AG04450 (cell line): ENCODE measurements at regions of chrX and their contacts with region 1.

Region 1: GRCh38 chrX:49884290-49884862 is 5.1 kb downstream of the USP27X start:
- DNase-seq: no peak
- H3K4me3 ChIP-seq: no peak overlapping the region
- H3K27ac ChIP-seq: no peak overlapping the region
- H3K27me3 ChIP-seq: no peaks in the 10 kb centered on the region
- CTCF ChIP-seq: peak; percentile 71

Region 2: DNA sequence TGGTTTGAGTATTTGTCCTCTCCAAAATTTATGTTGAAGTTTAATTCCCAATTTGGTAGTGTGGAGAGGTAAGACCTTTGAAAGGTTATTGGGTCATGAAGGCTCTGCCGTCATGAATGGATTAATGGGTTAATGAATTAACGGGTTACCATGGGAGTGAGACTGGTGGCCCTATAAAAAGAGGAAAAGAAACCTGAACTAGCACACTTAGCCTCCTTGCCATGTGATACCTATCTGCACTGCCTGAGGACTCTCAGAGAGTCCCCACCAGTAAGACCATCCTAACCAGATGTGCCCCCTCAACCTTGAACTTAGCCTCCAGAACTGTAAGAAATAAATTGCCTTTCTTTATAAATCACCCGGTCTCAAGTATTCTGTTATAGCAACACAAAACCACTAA is 227.8 kb before region 1 on chrX:
- CTCF ChIA-PET with region 1: no interaction called
- POLR2A ChIA-PET with region 1: no interaction called
- DNase-seq: no peak
- H3K4me3 ChIP-seq: no peak overlapping the region
- H3K27ac ChIP-seq: no peak overlapping the region
- H3K27me3 ChIP-seq: no peaks in the 10 kb centered on the region
- CTCF ChIP-seq: no peak

Region 3: DNA sequence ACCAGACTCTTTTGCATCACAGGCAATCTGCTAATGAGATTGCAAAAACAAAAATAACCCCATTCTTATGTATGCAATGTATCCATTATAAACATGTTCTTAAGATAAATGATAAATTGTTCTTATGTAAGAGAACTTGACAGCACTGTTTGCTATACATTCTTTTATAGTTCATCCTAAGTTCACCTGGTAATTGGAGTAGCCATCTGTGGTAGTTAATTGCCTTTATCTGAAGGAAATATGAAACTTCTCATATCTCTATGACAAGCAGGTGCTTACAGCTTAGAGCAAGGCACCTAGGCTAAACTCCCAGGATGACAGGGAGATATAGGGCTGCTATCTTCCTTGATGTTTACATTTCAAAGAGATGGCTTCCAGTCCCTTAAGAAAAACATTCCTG is 16.7 kb after region 1 on chrX:
- CTCF ChIA-PET with region 1: interaction called, 12 read pairs
- POLR2A ChIA-PET with region 1: no interaction called
- DNase-seq: no peak
- H3K4me3 ChIP-seq: no peak overlapping the region
- H3K27ac ChIP-seq: no peak overlapping the region
- H3K27me3 ChIP-seq: no peaks in the 10 kb centered on the region
- CTCF ChIP-seq: no peak

Region 4: DNA sequence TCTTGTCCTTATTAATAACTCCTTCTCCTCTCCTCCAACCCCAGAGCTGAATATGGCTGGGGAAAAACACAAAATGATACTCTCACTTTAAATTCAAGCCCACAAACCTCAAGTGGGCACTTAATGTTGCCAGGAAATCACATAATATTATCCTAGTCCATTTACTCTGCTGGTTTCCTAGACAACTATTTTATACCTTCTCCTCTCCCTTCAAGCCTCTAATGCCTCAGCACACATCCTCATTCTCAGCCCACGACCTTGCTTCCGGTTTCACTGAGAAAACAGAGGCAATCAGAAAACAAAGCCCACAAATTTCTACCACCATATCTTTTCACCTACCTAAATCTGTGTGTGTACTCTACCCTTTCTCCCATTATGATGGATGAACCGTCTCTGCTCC is 26.0 kb after region 1 on chrX:
- CTCF ChIA-PET with region 1: interaction called, 11 read pairs
- POLR2A ChIA-PET with region 1: no interaction called
- DNase-seq: no peak
- H3K4me3 ChIP-seq: no peak overlapping the region
- H3K27ac ChIP-seq: no peak overlapping the region
- H3K27me3 ChIP-seq: no peaks in the 10 kb centered on the region
- CTCF ChIP-seq: no peak

Region 5: GRCh38 chrX:49915361-49916222 is 31.2 kb after region 1 on chrX:
- CTCF ChIA-PET with region 1: interaction called, 16 read pairs
- POLR2A ChIA-PET with region 1: no interaction called
- DNase-seq: peak; percentile 15
- H3K4me3 ChIP-seq: no peak overlapping the region
- H3K27ac ChIP-seq: no peak overlapping the region
- H3K27me3 ChIP-seq: no peaks in the 10 kb centered on the region
- CTCF ChIP-seq: peak; percentile 80

Region 6: DNA sequence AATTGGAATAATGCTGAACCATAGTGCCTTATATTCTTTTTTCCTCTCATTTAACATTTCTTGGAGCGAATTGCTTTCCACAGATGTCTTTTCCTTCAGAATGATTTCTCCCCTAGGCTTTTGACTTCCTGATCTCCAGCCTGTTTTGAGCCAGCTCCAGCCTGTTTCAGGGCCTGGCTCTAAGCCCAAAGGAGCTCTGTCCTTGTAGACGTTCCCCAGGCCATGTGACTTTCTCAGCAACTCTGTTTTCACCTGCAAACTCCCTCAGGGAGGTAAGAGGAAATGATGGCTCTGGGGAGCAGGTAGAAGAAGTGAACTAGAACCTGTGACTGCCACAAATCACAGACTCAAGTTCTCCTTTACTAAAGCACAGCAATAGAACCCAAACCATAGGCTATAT is 227.4 kb after region 1 on chrX:
- CTCF ChIA-PET with region 1: no interaction called
- POLR2A ChIA-PET with region 1: no interaction called
- DNase-seq: no peak
- H3K4me3 ChIP-seq: no peak overlapping the region
- H3K27ac ChIP-seq: no peak overlapping the region
- H3K27me3 ChIP-seq: no peaks in the 10 kb centered on the region
- CTCF ChIP-seq: no peak

Region 7: DNA sequence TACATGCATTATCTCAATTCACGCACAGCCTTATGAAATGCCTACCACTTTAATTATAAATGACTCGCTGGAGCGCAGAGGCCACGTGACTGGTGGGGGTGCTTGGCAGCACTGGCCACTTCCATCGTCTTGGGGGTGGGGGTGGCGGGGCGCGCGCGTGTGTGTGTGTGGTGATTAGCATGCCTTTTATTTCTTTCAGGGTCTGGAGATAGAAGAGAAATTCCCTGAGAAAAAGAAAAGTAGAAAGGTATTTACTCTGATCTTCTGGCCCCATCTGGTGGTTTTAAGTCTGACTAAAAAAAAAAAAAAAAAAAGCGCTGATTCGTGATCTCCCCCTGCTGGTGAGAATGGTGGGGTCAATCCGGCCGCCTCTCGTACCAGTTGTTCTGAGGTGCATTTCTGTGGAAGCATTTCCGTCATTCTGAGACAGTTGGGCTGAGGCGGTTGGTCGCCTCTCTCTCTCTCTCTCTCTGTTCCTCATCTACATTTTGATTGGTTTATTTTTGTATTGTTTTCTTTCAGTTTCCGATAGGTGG is 320.1 kb after region 1 on chrX and contains the start of gene CCNB3:
- CTCF ChIA-PET with region 1: interaction called, 17 read pairs
- POLR2A ChIA-PET with region 1: no interaction called
- DNase-seq: peak; percentile 10
- H3K4me3 ChIP-seq: peak within 1 kb of the TSS; percentile 34
- H3K27ac ChIP-seq: no peak within 1 kb of the TSS
- H3K27me3 ChIP-seq: no peaks in the 10 kb centered on the region
- CTCF ChIP-seq: peak; percentile 78
- polyA plus RNA-seq, gene CCNB3: 0.05 and 0.07 TPM in 2 replicates